ENCODE measurements at regions of chr3 and their contacts with region 1.

Region 1: GRCh38 chr3:127822698-127823425 is 547 bp upstream of the MGLL start:
- DNase-seq: peak; percentile 33
- ATAC-seq: peak; percentile 71
- H3K4me3 ChIP-seq: peak overlapping the region; percentile 95
- H3K27ac ChIP-seq: peak overlapping the region; percentile 80
- H3K4me1 ChIP-seq: peaks cover 16% of the 10 kb centered on the region
- H3K27me3 ChIP-seq: no peaks in the 10 kb centered on the region
- CTCF ChIP-seq: peak; percentile 37
- POLR2A ChIP-seq: no peak
- RAD21 ChIP-seq: peak; percentile 34; the same call in 1 of the 2 replicates

Region 2: GRCh38 chr3:127690823-127691452 is 131.9 kb before region 1 on chr3:
- CTCF ChIA-PET with region 1: no interaction called
- POLR2A ChIA-PET with region 1: no interaction called
- dilution Hi-C with region 1: no loop called
- in situ Hi-C with region 1: no loop called
- intact Hi-C with region 1: loop called (anchors 2 kb)
- DNase-seq: peak; percentile 70
- ATAC-seq: peak; percentile 73
- H3K4me3 ChIP-seq: no peak overlapping the region
- H3K27ac ChIP-seq: peak overlapping the region; percentile 80
- H3K4me1 ChIP-seq: peaks cover 26% of the 10 kb centered on the region
- H3K27me3 ChIP-seq: no peaks in the 10 kb centered on the region
- CTCF ChIP-seq: peak; percentile 74
- POLR2A ChIP-seq: no peak
- RAD21 ChIP-seq: peak; percentile 78

Region 3: GRCh38 chr3:127735767-127736704 is 86.8 kb before region 1 on chr3:
- CTCF ChIA-PET with region 1: no interaction called
- POLR2A ChIA-PET with region 1: no interaction called
- dilution Hi-C with region 1: no loop called
- in situ Hi-C with region 1: no loop called
- intact Hi-C with region 1: loop called (anchors 5 kb)
- DNase-seq: peak; percentile 86
- ATAC-seq: peak; percentile 33; the same call in 1 of the 2 replicates
- H3K4me3 ChIP-seq: no peak overlapping the region
- H3K27ac ChIP-seq: peak overlapping the region; percentile 60
- H3K4me1 ChIP-seq: peaks cover 25% of the 10 kb centered on the region
- H3K27me3 ChIP-seq: no peaks in the 10 kb centered on the region
- CTCF ChIP-seq: no peak
- POLR2A ChIP-seq: no peak
- RAD21 ChIP-seq: no peak

Region 4: DNA sequence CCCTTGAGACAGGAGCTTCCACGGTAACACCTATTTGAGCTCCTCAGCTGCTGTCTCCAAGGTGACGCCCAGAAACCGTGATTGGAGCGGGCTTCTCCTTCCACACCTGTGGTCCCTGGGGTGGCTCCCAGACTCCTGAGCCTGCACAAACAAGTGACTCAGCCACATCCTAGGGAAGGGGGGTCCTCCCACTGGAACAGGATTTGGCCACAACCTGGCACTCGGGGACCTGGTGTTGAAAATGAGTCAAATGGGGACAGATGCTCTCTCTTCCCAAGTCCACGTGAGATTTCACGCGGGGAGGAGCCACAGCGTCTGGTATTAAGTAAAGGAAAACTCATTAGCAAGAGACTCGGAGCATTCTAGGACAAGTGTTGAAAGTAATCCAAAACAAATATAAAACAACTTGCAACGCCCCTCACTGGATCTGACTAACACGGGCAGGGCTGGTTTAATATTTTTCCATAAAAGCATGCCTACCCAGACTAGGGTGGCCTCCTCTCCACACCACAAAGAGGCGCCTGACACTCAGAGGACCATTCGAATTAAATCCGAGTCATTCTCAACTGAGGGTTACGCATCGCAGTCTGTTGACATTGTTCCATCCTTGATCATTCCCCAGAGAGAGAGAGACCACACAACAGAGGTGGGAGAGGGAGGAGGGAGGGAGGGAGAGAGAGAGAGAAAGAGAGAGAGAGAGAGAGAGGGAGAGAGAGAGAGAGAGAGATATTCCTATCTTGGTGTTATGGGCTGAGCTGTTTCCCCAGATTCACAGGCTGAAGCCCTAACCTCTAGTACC is 74.9 kb before region 1 on chr3:
- CTCF ChIA-PET with region 1: no interaction called
- POLR2A ChIA-PET with region 1: no interaction called
- dilution Hi-C with region 1: no loop called
- in situ Hi-C with region 1: no loop called
- intact Hi-C with region 1: loop called (anchors 2 kb)
- DNase-seq: peak; percentile 95
- ATAC-seq: peak; percentile 84
- H3K4me3 ChIP-seq: no peak overlapping the region
- H3K27ac ChIP-seq: peak overlapping the region; percentile 35
- H3K4me1 ChIP-seq: peaks cover 34% of the 10 kb centered on the region
- H3K27me3 ChIP-seq: no peaks in the 10 kb centered on the region
- CTCF ChIP-seq: peak; percentile 45
- POLR2A ChIP-seq: no peak
- RAD21 ChIP-seq: peak; percentile 59

Region 5: DNA sequence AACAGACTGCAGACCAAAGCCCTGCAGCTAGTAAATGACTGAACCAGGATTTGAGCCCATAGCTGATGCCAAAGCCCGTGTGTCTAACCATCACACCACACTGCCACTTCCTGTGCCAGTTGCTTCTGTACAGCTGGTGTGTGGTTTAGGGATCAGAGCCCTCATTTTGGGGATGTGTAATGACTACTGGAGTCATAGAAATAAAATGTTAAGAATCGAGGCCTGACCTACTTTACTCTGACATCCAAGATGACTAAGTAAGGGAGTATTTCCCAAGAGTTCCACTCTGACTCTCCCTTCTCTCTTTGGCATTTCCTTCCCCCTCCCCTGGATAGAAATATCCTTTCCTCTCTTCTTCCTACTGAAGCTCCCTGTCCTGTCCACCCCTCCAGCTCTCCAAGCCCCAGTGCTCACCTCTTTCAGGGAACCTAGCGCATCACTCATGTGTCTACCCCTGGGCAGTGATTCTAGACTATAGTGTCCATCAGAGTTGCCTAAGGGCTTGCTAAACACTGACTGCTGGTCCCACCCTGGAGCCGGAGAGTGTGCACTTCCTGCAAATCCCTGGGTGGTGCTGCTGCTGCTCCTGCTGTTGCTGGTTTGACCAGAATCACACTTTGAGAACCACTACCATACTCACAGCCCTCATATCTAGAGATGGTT is 54.4 kb before region 1 on chr3:
- CTCF ChIA-PET with region 1: interaction called, 3 read pairs
- POLR2A ChIA-PET with region 1: no interaction called
- dilution Hi-C with region 1: no loop called
- in situ Hi-C with region 1: no loop called
- intact Hi-C with region 1: loop called (anchors 1 kb)
- DNase-seq: peak; percentile 99
- ATAC-seq: peak; percentile 87
- H3K4me3 ChIP-seq: no peak overlapping the region
- H3K27ac ChIP-seq: peak overlapping the region; percentile 99
- H3K4me1 ChIP-seq: peaks cover 30% of the 10 kb centered on the region
- H3K27me3 ChIP-seq: no peaks in the 10 kb centered on the region
- CTCF ChIP-seq: peak; percentile 19
- POLR2A ChIP-seq: no peak
- RAD21 ChIP-seq: peak; percentile 33; the same call in 1 of the 2 replicates